ENCODE measurements at regions of chr9 and their contacts with region 1.

Region 1: DNA sequence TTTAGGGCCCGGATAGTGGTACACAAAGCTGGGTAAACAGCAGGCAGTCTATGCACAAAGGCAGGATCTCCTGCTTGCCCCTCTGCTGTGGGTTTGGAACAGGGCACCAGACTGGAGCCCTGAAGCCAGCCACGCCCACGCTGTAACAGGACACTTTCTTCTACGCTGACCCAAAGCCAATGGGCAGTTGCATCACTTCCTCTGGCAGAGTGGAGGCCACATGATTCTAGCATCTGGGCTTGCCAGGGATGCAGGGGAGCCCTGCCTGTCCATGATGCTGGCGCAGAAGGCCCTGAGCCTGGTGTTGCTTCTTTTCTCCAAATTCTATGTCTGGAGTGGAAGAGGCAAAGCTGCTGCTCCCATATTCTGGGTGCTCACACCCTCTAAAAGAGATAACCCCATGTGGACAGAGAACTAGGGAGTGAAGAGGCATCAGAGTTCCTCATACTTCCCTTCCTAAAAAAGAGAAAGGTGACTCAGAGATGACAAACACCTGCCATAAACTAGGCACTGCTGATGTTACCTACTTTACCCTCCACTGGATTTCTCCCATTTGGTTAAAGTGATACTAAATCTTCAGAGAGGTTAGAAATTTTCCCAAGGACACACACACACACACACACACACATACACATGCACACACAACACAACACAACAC is 260.3 kb upstream of the KLF4 start:
- DNase-seq: no peak
- ATAC-seq: no peak
- H3K4me3 ChIP-seq: no peak overlapping the region
- H3K27ac ChIP-seq: no peak overlapping the region
- H3K4me1 ChIP-seq: no peaks in the 10 kb centered on the region
- H3K27me3 ChIP-seq: no peaks in the 10 kb centered on the region
- CTCF ChIP-seq: no peak
- EP300 ChIP-seq: no peak
- POLR2A ChIP-seq: no peak
- RAD21 ChIP-seq: no peak

Region 2: GRCh38 chr9:107425101-107426045 is 324.5 kb before region 1 on chr9:
- CTCF ChIA-PET with region 1: no interaction called
- POLR2A ChIA-PET with region 1: no interaction called
- RAD21 ChIA-PET with region 1: no interaction called
- SMC1A ChIA-PET with region 1: no interaction called
- in situ Hi-C with region 1: no loop called
- intact Hi-C with region 1: no loop called
- DNase-seq: no peak
- ATAC-seq: peak; percentile 90
- H3K4me3 ChIP-seq: no peak overlapping the region
- H3K27ac ChIP-seq: no peak overlapping the region
- H3K4me1 ChIP-seq: no peaks in the 10 kb centered on the region
- H3K27me3 ChIP-seq: no peaks in the 10 kb centered on the region
- CTCF ChIP-seq: peak; percentile 67 to 97 (median 95)
- EP300 ChIP-seq: no peak
- POLR2A ChIP-seq: no peak
- RAD21 ChIP-seq: no peak

Region 3: GRCh38 chr9:107732781-107733522 is 17.0 kb before region 1 on chr9:
- CTCF ChIA-PET with region 1: interaction called, 4 read pairs
- POLR2A ChIA-PET with region 1: interaction called, 7 read pairs
- RAD21 ChIA-PET with region 1: interaction called, 11 read pairs
- SMC1A ChIA-PET with region 1: interaction called, 18 read pairs
- in situ Hi-C with region 1: no loop called
- intact Hi-C with region 1: no loop called
- DNase-seq: no peak
- ATAC-seq: peak; percentile 30; the same call in 2 of the 3 replicates
- H3K4me3 ChIP-seq: no peak overlapping the region
- H3K27ac ChIP-seq: no peak overlapping the region
- H3K4me1 ChIP-seq: no peaks in the 10 kb centered on the region
- H3K27me3 ChIP-seq: no peaks in the 10 kb centered on the region
- CTCF ChIP-seq: no peak
- EP300 ChIP-seq: no peak
- POLR2A ChIP-seq: no peak
- RAD21 ChIP-seq: no peak

Region 4: DNA sequence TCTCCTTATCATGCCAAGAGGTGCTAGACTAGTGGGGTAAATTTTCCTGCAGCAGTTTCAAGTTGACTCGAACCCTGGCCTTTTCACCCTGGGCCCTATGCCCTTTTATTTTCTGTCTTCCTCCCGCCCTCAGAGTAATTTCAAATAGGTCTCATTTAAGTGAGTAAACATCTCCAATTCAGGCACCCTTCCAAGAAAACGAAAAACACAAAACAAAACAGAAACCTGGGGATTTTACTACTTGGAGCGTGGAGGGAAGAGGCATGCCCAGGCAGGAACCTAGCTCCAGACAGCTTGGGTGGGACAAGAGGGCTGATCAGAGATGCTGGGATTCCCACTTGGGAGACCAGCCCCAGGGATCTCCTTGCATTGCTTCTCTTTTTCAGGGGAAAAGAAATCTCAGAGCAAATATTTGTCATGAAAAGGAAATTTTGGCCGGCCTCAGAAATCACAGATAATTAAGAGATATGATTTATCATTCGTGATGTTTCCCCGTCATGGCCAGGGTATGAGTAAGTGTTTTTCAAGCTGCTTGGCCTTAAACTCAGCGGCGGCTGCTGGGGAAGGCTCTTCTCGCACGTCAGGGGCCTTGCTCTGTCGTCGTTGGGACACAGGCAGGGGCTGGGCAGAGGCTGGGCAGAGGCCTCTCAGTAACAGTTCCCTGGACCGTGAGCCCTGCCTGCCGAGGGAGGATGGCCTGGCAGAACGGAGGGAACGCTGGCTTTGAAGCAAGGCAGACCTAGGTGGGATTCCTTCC is 11.8 kb before region 1 on chr9:
- CTCF ChIA-PET with region 1: interaction called, 5 read pairs
- POLR2A ChIA-PET with region 1: interaction called, 11 read pairs
- RAD21 ChIA-PET with region 1: interaction called, 12 read pairs
- SMC1A ChIA-PET with region 1: interaction called, 19 read pairs
- in situ Hi-C with region 1: no loop called
- intact Hi-C with region 1: no loop called
- DNase-seq: no peak
- ATAC-seq: peak; percentile 53
- H3K4me3 ChIP-seq: no peak overlapping the region
- H3K27ac ChIP-seq: no peak overlapping the region
- H3K4me1 ChIP-seq: no peaks in the 10 kb centered on the region
- H3K27me3 ChIP-seq: no peaks in the 10 kb centered on the region
- CTCF ChIP-seq: no peak
- EP300 ChIP-seq: no peak
- POLR2A ChIP-seq: no peak
- RAD21 ChIP-seq: no peak

Region 5: GRCh38 chr9:107760454-107761237 is 10.7 kb after region 1 on chr9:
- CTCF ChIA-PET with region 1: interaction called, 4 read pairs
- POLR2A ChIA-PET with region 1: interaction called, 6 read pairs
- RAD21 ChIA-PET with region 1: interaction called, 12 read pairs
- SMC1A ChIA-PET with region 1: interaction called, 17 read pairs
- in situ Hi-C with region 1: no loop called
- intact Hi-C with region 1: no loop called
- DNase-seq: no peak
- ATAC-seq: no peak
- H3K4me3 ChIP-seq: no peak overlapping the region
- H3K27ac ChIP-seq: no peak overlapping the region
- H3K4me1 ChIP-seq: no peaks in the 10 kb centered on the region
- H3K27me3 ChIP-seq: no peaks in the 10 kb centered on the region
- CTCF ChIP-seq: no peak
- EP300 ChIP-seq: no peak
- POLR2A ChIP-seq: no peak
- RAD21 ChIP-seq: no peak

Region 6: DNA sequence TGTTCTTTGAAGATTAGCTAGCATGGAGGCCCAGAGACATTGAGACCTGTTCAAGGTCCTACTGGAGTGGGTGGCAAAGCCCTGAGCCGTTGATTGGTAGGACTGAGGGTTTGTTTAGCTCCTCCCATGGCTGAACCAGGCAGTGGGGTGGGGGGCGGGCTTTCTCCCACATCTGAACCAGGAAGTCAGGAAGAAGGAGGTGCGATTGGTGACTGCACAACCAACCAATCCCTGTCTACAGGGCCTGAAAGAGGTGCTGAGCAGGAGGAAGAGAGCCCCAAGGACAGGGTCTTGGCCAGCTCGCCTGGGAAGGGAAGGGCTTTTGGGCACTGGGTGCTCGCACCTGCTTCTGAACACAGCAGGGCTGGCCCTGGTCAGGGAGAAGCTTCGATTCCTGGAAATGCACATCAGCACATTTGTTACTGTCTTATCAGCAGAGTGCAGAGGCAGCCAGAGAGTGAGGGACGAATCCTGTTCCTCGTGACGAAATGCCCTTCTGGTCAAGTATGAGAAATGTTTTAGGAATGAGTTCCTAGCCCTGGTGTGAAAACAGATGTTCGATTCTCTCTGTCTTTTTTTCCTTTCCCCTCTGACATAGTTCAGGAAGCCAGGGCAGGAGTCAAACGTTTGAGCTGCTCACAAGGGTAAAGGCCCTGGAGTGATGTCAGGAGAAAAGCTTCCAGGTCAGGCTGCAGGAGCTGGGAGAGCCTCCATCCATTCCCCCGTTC is 34.5 kb after region 1 on chr9:
- CTCF ChIA-PET with region 1: no interaction called
- POLR2A ChIA-PET with region 1: interaction called, 8 read pairs
- RAD21 ChIA-PET with region 1: interaction called, 5 read pairs
- SMC1A ChIA-PET with region 1: interaction called, 11 read pairs
- in situ Hi-C with region 1: no loop called
- intact Hi-C with region 1: no loop called
- DNase-seq: no peak
- ATAC-seq: no peak; the same call in 1 of the 3 replicates
- H3K4me3 ChIP-seq: no peak overlapping the region
- H3K27ac ChIP-seq: no peak overlapping the region
- H3K4me1 ChIP-seq: no peaks in the 10 kb centered on the region
- H3K27me3 ChIP-seq: no peaks in the 10 kb centered on the region
- CTCF ChIP-seq: no peak
- EP300 ChIP-seq: no peak
- POLR2A ChIP-seq: no peak
- RAD21 ChIP-seq: no peak

Region 7: DNA sequence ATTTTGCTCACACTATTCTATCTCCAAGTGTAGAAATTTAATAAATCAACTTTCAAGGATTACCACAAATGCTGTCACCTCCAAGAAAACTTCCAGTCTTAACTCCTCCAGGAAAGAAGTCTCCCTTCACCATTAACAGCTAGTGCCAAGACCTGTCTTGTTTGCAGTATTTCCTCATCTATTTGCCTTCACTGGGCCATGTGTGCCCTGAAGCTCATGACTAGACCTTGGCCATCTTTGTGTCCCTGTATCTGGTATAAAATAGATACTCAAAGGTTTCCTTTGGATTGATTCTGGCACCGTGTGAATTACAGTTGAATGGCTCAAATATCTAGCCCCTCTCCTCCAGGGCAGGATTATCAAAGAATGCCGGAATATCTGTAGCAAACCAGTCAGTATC is 86.4 kb after region 1 on chr9:
- CTCF ChIA-PET with region 1: no interaction called
- POLR2A ChIA-PET with region 1: no interaction called
- RAD21 ChIA-PET with region 1: no interaction called
- SMC1A ChIA-PET with region 1: no interaction called
- in situ Hi-C with region 1: no loop called
- intact Hi-C with region 1: no loop called
- DNase-seq: no peak
- ATAC-seq: no peak
- H3K4me3 ChIP-seq: no peak overlapping the region
- H3K27ac ChIP-seq: no peak overlapping the region
- H3K4me1 ChIP-seq: no peaks in the 10 kb centered on the region
- H3K27me3 ChIP-seq: no peaks in the 10 kb centered on the region
- CTCF ChIP-seq: no peak
- EP300 ChIP-seq: no peak
- POLR2A ChIP-seq: no peak
- RAD21 ChIP-seq: no peak